ENCODE measurements at regions of chr13 and their contacts with region 1.

Region 1: DNA sequence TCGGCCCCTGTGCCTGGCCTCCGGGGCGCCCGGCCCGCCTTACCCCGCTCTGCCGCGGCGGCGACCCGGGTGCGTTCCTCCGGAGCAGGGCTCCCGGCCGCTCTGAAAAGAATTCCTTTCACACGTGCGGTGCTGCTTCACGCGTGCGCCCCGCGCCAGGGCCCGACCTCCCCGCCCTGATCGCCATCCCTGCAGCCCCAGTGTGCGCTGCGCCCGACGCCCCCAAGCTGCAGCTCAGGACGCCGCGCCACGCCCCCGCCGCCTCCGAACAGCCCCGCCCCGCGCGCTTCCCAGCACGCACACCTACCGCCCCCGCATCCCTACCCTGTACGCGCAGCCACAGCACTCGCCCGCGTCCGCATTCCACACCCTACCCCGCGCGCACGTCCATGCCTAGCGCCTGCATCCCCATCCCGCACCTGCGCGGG is at the start of gene GJA3:
- DNase-seq: peak in 1 of 2 donors; percentile 56
- ATAC-seq: peak; percentile 45
- total RNA-seq, gene GJA3: not detected

Region 2: DNA sequence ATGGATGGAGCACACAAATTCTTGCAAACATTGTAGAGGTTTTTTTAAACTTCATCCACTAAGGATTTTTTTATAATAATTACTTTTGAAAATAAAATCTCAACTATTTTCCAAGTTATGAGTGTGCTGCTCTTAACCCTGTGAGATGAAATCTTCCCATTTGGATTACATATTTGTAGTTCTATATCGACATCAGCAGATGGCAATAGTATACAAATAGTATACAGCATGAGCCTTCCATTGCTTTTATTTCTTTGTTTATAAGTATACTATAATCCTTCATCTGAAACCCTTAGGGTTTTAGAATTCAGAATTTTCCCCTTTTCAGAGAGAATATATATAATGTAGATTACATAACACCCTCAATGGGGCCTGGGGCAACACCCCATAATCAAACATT is 70.5 kb before region 1 on chr13:
- intact Hi-C with region 1: loop called in 1 of 2 experiments (anchors 10 kb)
- DNase-seq: no peak
- ATAC-seq: peak; percentile 68